CD4-positive, alpha-beta T cell (primary cell): ENCODE measurements at regions of chr5 and their contacts with region 1.

Region 1: GRCh38 chr5:55037046-55037771 is 13.2 kb downstream of the GZMK start:
- DNase-seq: peak in 13 of 14 experiments; percentile 17 to 85 (median 51)
- ATAC-seq: peak; percentile 91
- H3K4me3 ChIP-seq: no peak overlapping the region
- H3K4me3 Mint-ChIP-seq: peak overlapping the region; percentile 40
- H3K27ac ChIP-seq: peak overlapping the region; percentile 55 to 64
- H3K27ac Mint-ChIP-seq: peak overlapping the region; percentile 80
- H3K4me1 ChIP-seq: peaks cover 15% of the 10 kb centered on the region
- H3K4me1 Mint-ChIP-seq: peaks cover 39% of the 10 kb centered on the region
- H3K27me3 ChIP-seq: no peaks in the 10 kb centered on the region
- H3K27me3 Mint-ChIP-seq: no peaks in the 10 kb centered on the region
- CTCF ChIP-seq: peak; percentile 14

Region 2: GRCh38 chr5:55021410-55021809 is 15.8 kb before region 1 on chr5:
- CTCF ChIA-PET with region 1: no interaction called
- POLR2A ChIA-PET with region 1: interaction called, 22 read pairs
- intact Hi-C with region 1: no loop called
- DNase-seq: no peak
- ATAC-seq: no peak
- H3K4me3 ChIP-seq: no peak overlapping the region
- H3K4me3 Mint-ChIP-seq: no peak overlapping the region
- H3K27ac ChIP-seq: peak overlapping the region in 1 of 2 donors; percentile 10
- H3K27ac Mint-ChIP-seq: no peak overlapping the region
- H3K4me1 ChIP-seq: peaks cover 21% of the 10 kb centered on the region
- H3K4me1 Mint-ChIP-seq: peaks cover 58% of the 10 kb centered on the region
- H3K27me3 ChIP-seq: no peaks in the 10 kb centered on the region
- H3K27me3 Mint-ChIP-seq: no peaks in the 10 kb centered on the region
- CTCF ChIP-seq: no peak

Region 3: DNA sequence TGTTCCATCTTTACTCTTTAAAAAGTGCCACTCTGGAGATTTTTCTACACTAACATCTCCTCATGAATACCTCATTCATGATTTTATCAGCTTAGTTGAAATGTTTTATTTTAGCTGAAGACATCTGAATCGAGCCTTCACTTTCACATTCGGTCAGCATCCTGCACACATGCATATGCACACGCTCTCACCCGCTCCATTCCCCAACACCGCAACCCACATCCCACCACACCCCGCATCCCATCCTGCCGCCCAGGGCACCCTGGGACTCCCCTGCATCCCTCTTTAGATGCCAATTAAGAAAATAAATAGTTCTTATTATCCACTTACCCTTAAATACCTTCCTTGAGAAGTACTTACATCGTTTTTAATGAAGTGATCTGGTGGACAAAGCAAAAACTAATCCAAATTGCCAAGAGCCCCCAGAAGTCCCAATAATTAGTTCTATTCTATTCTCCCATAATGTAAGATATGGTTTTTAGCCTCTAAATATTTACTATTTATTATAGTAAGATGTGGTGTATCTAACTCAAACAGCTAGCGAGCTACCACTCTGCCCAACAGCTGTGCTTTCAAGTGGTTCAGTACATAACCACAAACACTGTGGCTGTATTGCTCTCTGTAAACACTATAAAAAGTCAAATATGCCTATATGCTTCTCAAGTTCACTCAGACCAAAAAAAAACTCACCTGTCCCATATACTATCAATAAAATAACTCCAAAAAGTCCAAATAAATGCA is 25.0 kb after region 1 on chr5:
- CTCF ChIA-PET with region 1: interaction called, 4 read pairs
- POLR2A ChIA-PET with region 1: interaction called, 23 read pairs
- intact Hi-C with region 1: no loop called
- DNase-seq: peak; percentile 3 to 89 (median 32)
- ATAC-seq: peak; percentile 77
- H3K4me3 ChIP-seq: peak overlapping the region; percentile 42
- H3K4me3 Mint-ChIP-seq: peak overlapping the region; percentile 77
- H3K27ac ChIP-seq: no peak overlapping the region
- H3K27ac Mint-ChIP-seq: peak overlapping the region; percentile 14
- H3K4me1 ChIP-seq: peaks cover 22% of the 10 kb centered on the region
- H3K4me1 Mint-ChIP-seq: peaks cover 68% of the 10 kb centered on the region
- H3K27me3 ChIP-seq: no peaks in the 10 kb centered on the region
- H3K27me3 Mint-ChIP-seq: no peaks in the 10 kb centered on the region
- CTCF ChIP-seq: no peak

Region 4: GRCh38 chr5:55072666-55073065 is 35.5 kb after region 1 on chr5:
- CTCF ChIA-PET with region 1: no interaction called
- POLR2A ChIA-PET with region 1: interaction called, 15 read pairs
- intact Hi-C with region 1: no loop called
- DNase-seq: peak in 3 of 14 experiments; percentile 45 to 87 (median 53)
- ATAC-seq: peak; percentile 94
- H3K4me3 ChIP-seq: no peak overlapping the region
- H3K4me3 Mint-ChIP-seq: peak overlapping the region; percentile 4
- H3K27ac ChIP-seq: peak overlapping the region in 1 of 2 donors; percentile 41
- H3K27ac Mint-ChIP-seq: peak overlapping the region; percentile 78
- H3K4me1 ChIP-seq: peaks cover 19% of the 10 kb centered on the region
- H3K4me1 Mint-ChIP-seq: peaks cover 34% of the 10 kb centered on the region
- H3K27me3 ChIP-seq: no peaks in the 10 kb centered on the region
- H3K27me3 Mint-ChIP-seq: no peaks in the 10 kb centered on the region
- CTCF ChIP-seq: no peak